ENCODE measurements at regions of chr19 and their contacts with region 1.

Region 1: GRCh38 chr19:16542045-16542909 is at the start of gene CHERP:
- DNase-seq: peak; percentile 89 to 98 (median 96)
- ATAC-seq: peak; percentile 88
- H3K4me3 ChIP-seq: peak within 1 kb of the TSS; percentile 63 to 79
- H3K4me3 Mint-ChIP-seq: peak within 1 kb of the TSS; percentile 84
- H3K27ac ChIP-seq: peak within 1 kb of the TSS; percentile 69 to 81
- H3K27ac Mint-ChIP-seq: peak within 1 kb of the TSS; percentile 90
- H3K4me1 ChIP-seq: peaks cover 56% of the 10 kb centered on the region
- H3K4me1 Mint-ChIP-seq: peaks cover 55% of the 10 kb centered on the region
- H3K27me3 ChIP-seq: no peaks in the 10 kb centered on the region
- H3K27me3 Mint-ChIP-seq: no peaks in the 10 kb centered on the region
- CTCF ChIP-seq: no peak
- total RNA-seq, gene CHERP: 68.7 to 68.9 TPM

Region 2: GRCh38 chr19:15815306-15815705 is 727.0 kb before region 1 on chr19 and contains the start of gene OR10H1:
- CTCF ChIA-PET with region 1: no interaction called
- POLR2A ChIA-PET with region 1: no interaction called
- intact Hi-C with region 1: no loop called
- DNase-seq: no peak
- ATAC-seq: no peak
- H3K4me3 ChIP-seq: no peak within 1 kb of the TSS
- H3K4me3 Mint-ChIP-seq: no peak within 1 kb of the TSS
- H3K27ac ChIP-seq: no peak within 1 kb of the TSS
- H3K27ac Mint-ChIP-seq: no peak within 1 kb of the TSS
- H3K4me1 ChIP-seq: peaks cover 7% of the 10 kb centered on the region
- H3K4me1 Mint-ChIP-seq: peaks cover 11% of the 10 kb centered on the region
- H3K27me3 ChIP-seq: peaks cover 0 to 4% of the 10 kb centered on the region in 2 experiments
- H3K27me3 Mint-ChIP-seq: peaks cover 9% of the 10 kb centered on the region
- CTCF ChIP-seq: no peak
- total RNA-seq, gene OR10H1: not detected

Region 3: GRCh38 chr19:16470911-16471811 is 71.1 kb before region 1 on chr19:
- CTCF ChIA-PET with region 1: no interaction called
- POLR2A ChIA-PET with region 1: interaction called, 3 read pairs
- intact Hi-C with region 1: loop called (anchors 1 to 2 kb)
- DNase-seq: peak in 4 of 9 experiments; percentile 20 to 54 (median 39)
- ATAC-seq: peak; percentile 9
- H3K4me3 ChIP-seq: peak overlapping the region; percentile 50 to 69
- H3K4me3 Mint-ChIP-seq: peak overlapping the region; percentile 88
- H3K27ac ChIP-seq: peak overlapping the region in 1 of 2 experiments; percentile 33
- H3K27ac Mint-ChIP-seq: peak overlapping the region; percentile 57
- H3K4me1 ChIP-seq: peaks cover 21% of the 10 kb centered on the region
- H3K4me1 Mint-ChIP-seq: peaks cover 38% of the 10 kb centered on the region
- H3K27me3 ChIP-seq: no peaks in the 10 kb centered on the region
- H3K27me3 Mint-ChIP-seq: peaks cover 2% of the 10 kb centered on the region
- CTCF ChIP-seq: no peak

Region 4: GRCh38 chr19:16566161-16566560 is 23.9 kb after region 1 on chr19:
- CTCF ChIA-PET with region 1: no interaction called
- POLR2A ChIA-PET with region 1: interaction called, 10 read pairs
- intact Hi-C with region 1: loop called (anchors 1 kb)
- DNase-seq: peak; percentile 72 to 96 (median 82)
- ATAC-seq: peak; percentile 97
- H3K4me3 ChIP-seq: no peak overlapping the region
- H3K4me3 Mint-ChIP-seq: peak overlapping the region; percentile 73
- H3K27ac ChIP-seq: peak overlapping the region; percentile 49 to 66
- H3K27ac Mint-ChIP-seq: peak overlapping the region; percentile 99
- H3K4me1 ChIP-seq: peaks cover 21% of the 10 kb centered on the region
- H3K4me1 Mint-ChIP-seq: peaks cover 31% of the 10 kb centered on the region
- H3K27me3 ChIP-seq: no peaks in the 10 kb centered on the region
- H3K27me3 Mint-ChIP-seq: no peaks in the 10 kb centered on the region
- CTCF ChIP-seq: no peak

Region 5: DNA sequence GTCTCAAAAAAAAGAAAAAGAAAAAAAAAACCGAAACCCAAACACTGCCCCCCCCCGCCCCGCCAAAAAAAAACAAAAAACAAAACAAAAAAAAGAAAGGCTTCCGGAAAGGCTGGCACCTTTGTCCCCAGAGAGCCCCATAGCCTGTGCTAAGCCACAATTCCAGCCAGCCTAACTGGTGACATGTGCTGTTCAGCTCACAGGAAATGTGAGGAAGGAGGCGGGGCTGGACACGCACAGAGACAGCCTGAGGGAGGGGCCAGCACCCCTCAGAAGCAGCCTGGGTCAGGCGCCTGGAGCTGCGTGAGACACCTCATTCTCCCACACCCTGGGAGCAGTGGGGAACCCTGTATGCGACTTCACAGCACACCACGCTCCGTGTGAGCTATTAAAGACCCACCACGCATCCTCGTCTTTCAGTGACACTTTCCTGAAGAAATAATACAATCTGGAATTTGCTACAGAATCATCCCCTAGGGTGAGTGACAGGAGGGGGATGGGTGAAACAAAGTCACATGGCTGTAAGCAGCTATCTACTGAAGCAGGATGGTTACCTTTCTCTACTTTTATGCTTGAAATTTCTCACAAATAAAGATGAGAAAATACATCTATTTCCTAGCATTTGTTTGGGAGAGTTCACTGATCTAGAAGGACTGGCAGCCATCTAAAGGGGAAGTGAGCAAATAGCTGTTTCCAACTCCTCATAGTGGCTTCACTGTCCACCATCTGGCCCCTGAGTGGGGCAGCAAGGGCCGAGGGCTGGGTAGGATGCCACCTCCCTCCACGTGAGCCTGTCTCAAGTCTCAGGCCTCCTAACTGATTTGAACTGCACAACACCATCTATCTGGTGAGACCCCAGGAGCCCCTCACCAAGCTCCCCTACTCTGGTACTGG is 42.2 kb after region 1 on chr19:
- CTCF ChIA-PET with region 1: no interaction called
- POLR2A ChIA-PET with region 1: interaction called, 5 read pairs
- intact Hi-C with region 1: loop called (anchors 1 kb)
- DNase-seq: peak; percentile 77 to 99 (median 90)
- ATAC-seq: peak; percentile 80
- H3K4me3 ChIP-seq: peak overlapping the region; percentile 23 to 30
- H3K4me3 Mint-ChIP-seq: peak overlapping the region; percentile 70
- H3K27ac ChIP-seq: peak overlapping the region; percentile 18 to 84
- H3K27ac Mint-ChIP-seq: peak overlapping the region; percentile 94
- H3K4me1 ChIP-seq: peaks cover 76% of the 10 kb centered on the region
- H3K4me1 Mint-ChIP-seq: peaks cover 79% of the 10 kb centered on the region
- H3K27me3 ChIP-seq: no peaks in the 10 kb centered on the region
- H3K27me3 Mint-ChIP-seq: no peaks in the 10 kb centered on the region
- CTCF ChIP-seq: no peak

Region 6: DNA sequence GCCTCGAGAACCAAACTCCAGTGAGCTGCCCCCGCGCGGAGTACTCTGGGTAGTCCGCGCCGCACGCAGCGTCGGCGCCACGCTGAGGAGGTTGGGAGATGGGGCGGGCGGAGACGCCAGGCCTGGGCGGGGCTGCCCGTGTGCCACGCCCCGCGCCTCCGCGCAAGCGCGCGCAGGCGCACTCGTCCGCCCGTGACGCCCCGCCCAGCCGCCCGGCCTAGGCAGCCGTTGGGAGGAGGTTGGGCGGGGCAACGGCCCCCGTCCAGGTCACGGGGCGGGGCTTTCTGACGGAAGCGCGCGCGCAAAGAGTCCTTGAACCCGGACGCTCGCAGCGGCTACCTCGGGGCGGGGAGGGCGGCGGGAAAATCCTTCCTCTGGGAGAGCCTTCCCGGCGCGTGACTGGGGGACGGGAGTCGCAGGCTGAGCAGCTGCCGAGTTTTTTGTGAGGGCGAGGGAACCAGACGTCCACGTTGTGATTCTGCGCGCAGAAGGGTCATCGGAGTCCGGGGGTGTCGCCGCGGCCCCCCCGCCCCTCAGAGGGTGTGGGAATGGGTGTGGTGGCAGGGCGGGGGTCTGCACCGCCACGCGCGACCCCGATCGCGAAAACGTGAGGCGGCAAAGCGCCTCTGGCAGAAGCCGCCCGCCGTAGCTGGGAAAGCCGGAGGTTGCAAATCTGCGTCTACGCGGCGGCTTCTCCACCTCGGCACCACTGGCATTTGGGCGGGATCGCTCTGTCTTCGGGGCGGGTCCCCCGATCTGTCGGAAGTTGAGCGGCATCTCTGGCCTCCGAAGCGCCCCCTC is 86.1 kb after region 1 on chr19 and contains the start of gene MED26:
- CTCF ChIA-PET with region 1: no interaction called
- POLR2A ChIA-PET with region 1: interaction called, 16 read pairs
- intact Hi-C with region 1: loop called (anchors 1 kb)
- DNase-seq: peak; percentile 91 to 99 (median 95)
- ATAC-seq: peak; percentile 89
- H3K4me3 ChIP-seq: peak within 1 kb of the TSS; percentile 89 to 100
- H3K4me3 Mint-ChIP-seq: peak within 1 kb of the TSS; percentile 99
- H3K27ac ChIP-seq: peak within 1 kb of the TSS; percentile 93 to 97
- H3K27ac Mint-ChIP-seq: peak within 1 kb of the TSS; percentile 98
- H3K4me1 ChIP-seq: peaks cover 17% of the 10 kb centered on the region
- H3K4me1 Mint-ChIP-seq: peaks cover 47% of the 10 kb centered on the region
- H3K27me3 ChIP-seq: no peaks in the 10 kb centered on the region
- H3K27me3 Mint-ChIP-seq: no peaks in the 10 kb centered on the region
- CTCF ChIP-seq: no peak
- total RNA-seq, gene MED26: 65.6 to 68.0 TPM